Left ventricle myocardium inferior (tissue), 1 donor: ENCODE measurements at regions of chr1 and their contacts with region 1.

Region 1: DNA sequence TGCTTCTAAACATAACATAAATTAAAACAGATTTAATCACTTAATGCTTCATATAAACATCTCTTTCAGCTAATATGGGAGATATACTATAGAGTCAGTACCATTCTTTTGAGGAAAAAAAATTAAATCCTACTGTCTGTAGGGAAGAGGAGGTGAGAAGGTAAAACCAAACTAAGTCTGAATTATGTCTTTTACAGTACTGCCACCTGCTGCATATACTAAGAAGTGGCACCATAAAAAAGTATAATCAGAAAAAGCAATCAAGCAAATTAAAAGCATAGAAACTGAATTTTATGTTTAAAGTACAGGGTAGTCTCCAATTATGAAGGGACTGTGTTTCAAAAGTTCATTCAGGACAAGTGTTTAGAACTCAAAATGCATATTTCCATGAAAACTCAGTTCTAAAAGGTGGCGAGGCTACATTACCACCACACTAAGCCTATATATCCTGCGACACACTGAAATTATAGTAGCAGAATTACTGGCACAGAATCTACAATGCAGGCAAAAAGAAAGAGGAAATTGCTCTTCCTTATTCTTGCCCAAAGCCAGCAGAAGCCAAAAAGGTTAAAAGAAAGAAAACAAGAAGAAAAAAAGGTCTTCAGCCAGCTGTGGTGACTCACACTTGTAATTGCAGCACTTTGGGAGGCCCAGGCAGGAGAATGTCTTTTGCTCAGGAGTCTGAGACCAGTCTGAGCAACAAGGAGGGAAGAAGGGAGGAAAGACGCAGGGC is 9.0 kb downstream of the NSL1 start:
- DNase-seq: no peak
- H3K4me3 ChIP-seq: no peak overlapping the region
- H3K27ac ChIP-seq: no peak overlapping the region
- H3K4me1 ChIP-seq: no peaks in the 10 kb centered on the region
- H3K27me3 ChIP-seq: no peaks in the 10 kb centered on the region
- CTCF ChIP-seq: peak; percentile 69

Region 2: GRCh38 chr1:212665241-212666115 is 117.1 kb before region 1 on chr1:
- intact Hi-C with region 1: loop called (anchors 5 kb)
- DNase-seq: peak; percentile 83
- H3K4me3 ChIP-seq: peak overlapping the region; percentile 73
- H3K27ac ChIP-seq: peak overlapping the region; percentile 86
- H3K4me1 ChIP-seq: peaks cover 39% of the 10 kb centered on the region
- H3K27me3 ChIP-seq: no peaks in the 10 kb centered on the region
- CTCF ChIP-seq: peak; percentile 99